WTC11 (cell line): ENCODE measurements at regions of chr1 and their contacts with region 1.

Region 1: GRCh38 chr1:172727956-172728603 is 69.2 kb downstream of the FASLG start:
- DNase-seq: peak; percentile 58
- ATAC-seq: peak; percentile 100
- H3K4me3 Mint-ChIP-seq: no peak overlapping the region
- H3K27ac Mint-ChIP-seq: no peak overlapping the region
- H3K4me1 Mint-ChIP-seq: no peaks in the 10 kb centered on the region
- H3K27me3 Mint-ChIP-seq: no peaks in the 10 kb centered on the region; the same call in 1 of the 2 replicates
- CTCF ChIP-seq: peak; percentile 90

Region 2: GRCh38 chr1:172532700-172533509 is 195.2 kb before region 1 on chr1 and contains the start of gene SUCO:
- CTCF ChIA-PET with region 1: interaction called, 11 read pairs
- POLR2A ChIA-PET with region 1: no interaction called
- DNase-seq: peak; percentile 100
- ATAC-seq: peak; percentile 93
- H3K4me3 Mint-ChIP-seq: peak within 1 kb of the TSS; percentile 100
- H3K27ac Mint-ChIP-seq: peak within 1 kb of the TSS; percentile 100
- H3K4me1 Mint-ChIP-seq: peaks cover 43% of the 10 kb centered on the region
- H3K27me3 Mint-ChIP-seq: peaks cover 24% of the 10 kb centered on the region
- CTCF ChIP-seq: no peak
- total RNA-seq, gene SUCO: 32.9 to 37.4 TPM (median 33.7 TPM) in 3 replicates

Region 3: DNA sequence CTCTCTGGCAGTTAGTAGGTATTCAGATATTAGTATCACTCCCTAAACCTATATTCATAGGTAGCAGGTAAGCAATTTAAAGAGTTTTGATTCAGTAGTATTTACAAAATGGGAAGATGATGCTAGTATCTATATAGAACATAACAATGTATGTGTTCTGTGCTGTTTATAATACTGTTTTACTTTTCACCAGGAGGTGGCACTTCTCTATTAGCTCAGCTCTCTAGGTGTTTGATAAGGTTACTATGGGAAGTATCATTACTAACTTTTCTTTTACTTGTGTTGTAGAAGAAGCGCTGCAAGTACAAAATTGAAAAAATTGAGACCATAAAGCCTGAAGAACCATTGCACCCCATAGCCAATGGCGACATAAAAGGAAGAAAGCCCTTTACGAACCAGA is 118.6 kb before region 1 on chr1:
- CTCF ChIA-PET with region 1: interaction called, 13 read pairs
- POLR2A ChIA-PET with region 1: no interaction called
- DNase-seq: no peak
- ATAC-seq: peak; percentile 64; the same call in 1 of the 2 replicates
- H3K4me3 Mint-ChIP-seq: no peak overlapping the region
- H3K27ac Mint-ChIP-seq: no peak overlapping the region
- H3K4me1 Mint-ChIP-seq: no peaks in the 10 kb centered on the region
- H3K27me3 Mint-ChIP-seq: no peaks in the 10 kb centered on the region
- CTCF ChIP-seq: no peak

Region 4: DNA sequence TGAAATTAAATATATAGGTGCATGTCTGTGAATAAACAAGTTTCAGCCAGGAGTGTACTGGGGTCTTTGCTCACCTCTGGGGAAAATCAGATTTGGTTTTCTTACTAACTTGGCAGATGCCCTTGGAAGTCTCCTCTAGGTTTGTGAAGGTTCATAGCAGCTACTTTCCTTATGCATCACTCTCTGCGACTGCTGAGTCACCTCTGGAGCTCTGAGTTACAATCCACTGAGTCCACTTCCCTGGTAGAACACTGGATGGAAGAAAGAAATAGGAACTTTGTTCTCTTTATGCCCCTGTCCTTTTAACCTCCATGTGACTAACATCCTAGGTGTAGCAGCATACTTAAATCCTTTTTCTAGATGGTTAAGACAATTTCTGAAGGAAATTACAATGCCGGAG is 73.5 kb before region 1 on chr1:
- CTCF ChIA-PET with region 1: no interaction called
- POLR2A ChIA-PET with region 1: no interaction called
- DNase-seq: no peak
- ATAC-seq: no peak
- H3K4me3 Mint-ChIP-seq: no peak overlapping the region
- H3K27ac Mint-ChIP-seq: no peak overlapping the region
- H3K4me1 Mint-ChIP-seq: no peaks in the 10 kb centered on the region
- H3K27me3 Mint-ChIP-seq: no peaks in the 10 kb centered on the region
- CTCF ChIP-seq: no peak

Region 5: DNA sequence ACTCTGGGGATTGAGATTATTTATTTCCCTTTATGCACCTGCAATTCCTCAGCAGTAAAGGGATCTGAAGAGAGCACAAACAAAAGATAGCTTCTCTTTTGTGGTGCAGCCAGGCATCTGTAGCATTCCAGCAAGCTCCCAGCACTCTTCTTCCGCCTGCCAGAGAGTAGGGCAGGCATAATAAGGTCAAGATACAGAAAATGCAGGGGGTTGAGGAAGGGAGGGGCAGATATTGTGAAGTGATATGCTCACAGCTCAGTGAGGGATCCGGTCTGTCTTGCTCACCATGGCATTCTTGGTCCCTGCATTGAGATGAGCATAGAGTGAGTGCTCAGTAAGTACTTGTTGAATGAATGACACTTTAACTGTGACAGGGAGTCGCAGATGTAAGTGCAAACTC is 45.3 kb before region 1 on chr1:
- CTCF ChIA-PET with region 1: no interaction called
- POLR2A ChIA-PET with region 1: no interaction called
- DNase-seq: no peak
- ATAC-seq: peak; percentile 78
- H3K4me3 Mint-ChIP-seq: no peak overlapping the region
- H3K27ac Mint-ChIP-seq: no peak overlapping the region
- H3K4me1 Mint-ChIP-seq: peaks cover 28% of the 10 kb centered on the region
- H3K27me3 Mint-ChIP-seq: no peaks in the 10 kb centered on the region
- CTCF ChIP-seq: no peak

Region 6: DNA sequence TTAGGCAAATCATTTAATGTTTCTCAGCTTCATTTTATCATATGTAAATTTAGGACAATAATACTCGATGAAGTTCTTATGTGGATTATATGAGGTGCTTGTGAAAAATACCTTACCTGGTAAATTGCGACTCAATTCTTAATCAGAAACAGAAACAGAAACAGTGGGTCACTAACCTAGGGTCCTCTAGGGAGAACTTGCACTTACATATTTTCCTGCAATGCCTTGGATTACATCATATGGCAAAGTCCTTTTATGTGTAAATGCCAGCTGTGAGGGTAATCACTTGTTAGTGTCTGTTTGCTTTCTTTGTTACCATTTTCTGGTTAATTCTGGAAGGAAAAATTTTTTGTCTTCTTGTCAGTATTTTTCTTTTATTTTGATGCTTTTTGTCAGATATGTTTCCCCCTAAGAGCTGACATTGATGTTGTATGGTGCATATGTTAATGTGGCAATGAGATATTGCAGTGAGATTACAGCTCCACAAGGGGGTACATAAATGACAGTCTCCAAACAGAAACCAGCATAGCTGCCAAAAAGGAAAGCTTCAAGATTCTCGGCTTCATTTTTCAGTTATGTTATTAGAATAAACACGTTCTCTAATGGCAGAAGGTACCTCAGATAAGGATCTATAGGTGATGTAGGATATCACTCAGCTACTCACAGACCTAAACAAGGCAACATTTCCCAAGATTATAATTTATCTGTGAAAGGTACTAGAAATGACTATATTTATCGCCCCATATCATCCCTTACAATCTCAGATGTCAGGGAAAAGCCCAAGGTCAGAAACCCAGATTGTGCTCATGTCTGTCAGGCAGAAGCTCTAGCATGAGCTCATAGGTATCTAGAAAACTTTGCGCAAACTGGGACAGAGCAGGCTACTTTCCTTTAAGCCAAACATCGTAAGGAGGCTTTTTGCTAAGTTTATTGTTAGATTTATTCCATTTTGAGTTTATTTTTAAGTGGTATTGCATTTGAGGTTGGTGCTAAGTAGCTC is 50.7 kb after region 1 on chr1:
- CTCF ChIA-PET with region 1: no interaction called
- POLR2A ChIA-PET with region 1: no interaction called
- DNase-seq: no peak
- ATAC-seq: no peak
- H3K4me3 Mint-ChIP-seq: no peak overlapping the region
- H3K27ac Mint-ChIP-seq: no peak overlapping the region
- H3K4me1 Mint-ChIP-seq: peaks cover 5% of the 10 kb centered on the region; the same call in 1 of the 2 replicates
- H3K27me3 Mint-ChIP-seq: peaks cover 10% of the 10 kb centered on the region
- CTCF ChIP-seq: no peak

Region 7: DNA sequence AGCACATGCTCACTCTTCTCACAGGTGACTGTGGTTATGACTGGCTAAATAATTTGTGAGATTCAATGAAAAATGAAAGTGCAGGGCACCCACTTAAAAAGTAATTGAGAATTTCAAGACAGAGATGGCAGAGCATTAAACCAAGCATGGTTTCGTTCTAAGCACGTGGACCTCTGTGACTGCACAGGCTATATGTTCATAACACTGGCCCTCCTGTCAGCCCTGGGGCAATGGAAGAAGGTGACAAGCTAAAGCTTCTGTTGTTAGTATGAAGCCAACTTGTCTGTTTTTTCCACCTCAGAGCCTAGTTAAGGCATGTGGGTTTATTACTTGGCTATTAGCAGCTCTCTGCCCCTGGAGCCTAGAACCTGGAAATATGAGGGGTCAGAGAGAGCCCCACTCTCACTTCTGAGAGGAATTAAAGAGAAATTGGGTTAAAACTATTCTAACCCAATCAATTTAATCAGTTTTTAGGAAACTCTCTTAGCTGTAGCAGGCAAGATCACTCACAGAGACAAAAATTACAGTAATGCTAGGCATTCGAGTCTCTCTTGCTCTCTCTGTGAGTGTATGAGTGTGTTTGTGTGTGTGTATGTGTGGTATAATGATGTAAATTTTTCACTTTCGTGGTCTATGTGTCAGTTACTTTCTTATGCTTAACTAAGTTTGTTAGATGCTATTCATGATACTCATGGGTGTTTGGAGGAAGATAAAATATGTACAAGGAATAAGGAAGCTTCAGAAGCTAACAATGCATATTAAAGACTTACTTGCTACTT is 62.0 kb after region 1 on chr1:
- CTCF ChIA-PET with region 1: no interaction called
- POLR2A ChIA-PET with region 1: interaction called, 11 read pairs
- DNase-seq: no peak
- ATAC-seq: no peak
- H3K4me3 Mint-ChIP-seq: no peak overlapping the region
- H3K27ac Mint-ChIP-seq: no peak overlapping the region
- H3K4me1 Mint-ChIP-seq: peaks cover 9% of the 10 kb centered on the region
- H3K27me3 Mint-ChIP-seq: no peaks in the 10 kb centered on the region
- CTCF ChIP-seq: no peak